Activated T-helper 2 cell treated with anti-CD3 and anti-CD28 coated beads, Interferon-gamma antibody, Interleukin-2, Interleukin-4, amounts not matched to agents 10 μg/mL and 5 μg/mL and 100 μg/mL, durations not matched to agents 14 hours and 24 hours and 36 hours (primary cell): ENCODE measurements at regions of chr17 and their contacts with region 1.

Region 1: GRCh38 chr17:73311781-73312641 is at the start of gene CDC42EP4:
- DNase-seq: peak; percentile 86
- H3K4me3 Mint-ChIP-seq: peak within 1 kb of the TSS; percentile 82
- H3K27ac Mint-ChIP-seq: no peak within 1 kb of the TSS
- H3K4me1 Mint-ChIP-seq: peaks cover 6% of the 10 kb centered on the region
- H3K27me3 Mint-ChIP-seq: peaks cover 17% of the 10 kb centered on the region
- total RNA-seq, gene CDC42EP4: 1.6 and 2.8 TPM in 2 replicates

Region 2: DNA sequence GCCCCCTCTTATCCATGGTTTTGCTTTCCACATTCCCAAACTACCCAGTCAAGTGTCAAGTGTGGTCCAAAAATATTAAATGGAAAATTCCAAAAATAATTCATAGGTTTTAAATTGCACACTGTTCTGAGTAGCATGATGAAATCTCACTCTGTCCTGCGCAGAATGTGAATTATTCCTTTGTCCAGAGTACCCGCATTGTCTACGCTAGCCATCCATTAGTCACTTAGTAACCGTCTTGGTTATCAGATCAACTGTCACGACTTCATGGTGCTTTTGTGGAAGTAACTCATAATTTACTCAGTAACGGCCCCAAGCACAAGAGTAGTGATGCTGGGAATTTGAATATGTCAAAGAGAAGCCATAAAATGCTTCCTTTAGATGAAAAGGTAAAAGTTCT is 314.5 kb before region 1 on chr17:
- intact Hi-C with region 1: no loop called
- DNase-seq: no peak
- H3K4me3 Mint-ChIP-seq: no peak overlapping the region
- H3K27ac Mint-ChIP-seq: no peak overlapping the region
- H3K4me1 Mint-ChIP-seq: peaks cover 12% of the 10 kb centered on the region
- H3K27me3 Mint-ChIP-seq: no peaks in the 10 kb centered on the region

Region 3: GRCh38 chr17:73371285-73371684 is 59.3 kb after region 1 on chr17:
- intact Hi-C with region 1: loop called (anchors 5 kb)
- DNase-seq: no peak
- H3K4me3 Mint-ChIP-seq: no peak overlapping the region
- H3K27ac Mint-ChIP-seq: no peak overlapping the region
- H3K4me1 Mint-ChIP-seq: no peaks in the 10 kb centered on the region
- H3K27me3 Mint-ChIP-seq: peaks cover 9% of the 10 kb centered on the region

Region 4: GRCh38 chr17:73936908-73937627 is 625.1 kb after region 1 on chr17:
- intact Hi-C with region 1: no loop called
- DNase-seq: no peak
- H3K4me3 Mint-ChIP-seq: no peak overlapping the region
- H3K27ac Mint-ChIP-seq: no peak overlapping the region
- H3K4me1 Mint-ChIP-seq: no peaks in the 10 kb centered on the region
- H3K27me3 Mint-ChIP-seq: no peaks in the 10 kb centered on the region

Region 5: DNA sequence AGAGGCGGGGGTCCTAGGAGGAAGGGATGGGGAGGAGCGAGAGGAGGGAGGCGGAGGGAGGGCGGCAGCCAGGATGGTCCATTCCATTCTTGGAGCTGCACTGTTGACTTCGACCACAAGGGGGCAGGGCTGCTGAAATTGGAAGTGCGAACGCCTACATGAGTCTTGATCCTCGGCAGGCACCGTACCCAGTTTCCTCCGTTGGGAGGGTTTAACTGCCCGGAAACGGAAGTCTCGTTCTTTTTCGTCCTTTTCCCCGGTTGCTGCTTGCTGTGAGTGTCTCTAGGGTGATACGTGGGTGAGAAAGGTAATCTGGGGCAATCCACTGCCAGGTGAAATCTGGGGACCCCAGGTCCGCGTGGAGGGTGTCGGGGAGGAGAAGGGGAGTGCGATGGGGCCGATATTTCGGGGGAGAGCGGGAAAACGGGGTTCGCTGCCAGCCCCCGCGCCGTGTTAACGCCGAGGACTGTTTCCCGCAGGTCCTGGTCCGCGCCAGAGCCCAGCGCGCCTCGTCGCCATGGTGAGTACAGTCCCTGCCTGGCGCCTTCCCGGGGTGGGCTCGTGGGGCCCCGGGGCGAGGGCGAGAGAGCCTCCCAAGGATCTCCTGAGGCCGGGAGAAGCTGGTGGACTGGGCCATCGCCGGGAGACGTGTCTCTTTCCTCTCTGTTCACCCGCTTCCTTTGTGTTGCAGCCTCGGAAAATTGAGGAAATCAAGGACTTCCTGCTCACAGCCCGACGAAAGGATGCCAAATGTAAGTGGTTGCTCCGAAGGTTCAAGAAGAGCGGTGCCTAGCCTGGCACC is 891.6 kb after region 1 on chr17 and contains the start of gene RPL38:
- intact Hi-C with region 1: loop called (anchors 5 kb)
- DNase-seq: peak; percentile 91
- H3K4me3 Mint-ChIP-seq: peak within 1 kb of the TSS; percentile 98
- H3K27ac Mint-ChIP-seq: peak within 1 kb of the TSS; percentile 97
- H3K4me1 Mint-ChIP-seq: peaks cover 27% of the 10 kb centered on the region
- H3K27me3 Mint-ChIP-seq: peaks cover 13% of the 10 kb centered on the region
- total RNA-seq, gene RPL38: 1,248 and 1,338 TPM in 2 replicates